ENCODE measurements at regions of chr1 and their contacts with region 1.

Region 1: GRCh38 chr1:63148825-63149645 is 173.3 kb upstream of the FOXD3 start:
- DNase-seq: peak; percentile 20 to 62 (median 40)
- H3K4me3 ChIP-seq: no peak overlapping the region
- H3K27ac ChIP-seq: no peak overlapping the region
- H3K4me1 ChIP-seq: no peaks in the 10 kb centered on the region
- H3K27me3 ChIP-seq: peaks cover 13% of the 10 kb centered on the region
- CTCF ChIP-seq: peak; percentile 30 to 58 (median 52)
- POLR2A ChIP-seq: no peak

Region 2: DNA sequence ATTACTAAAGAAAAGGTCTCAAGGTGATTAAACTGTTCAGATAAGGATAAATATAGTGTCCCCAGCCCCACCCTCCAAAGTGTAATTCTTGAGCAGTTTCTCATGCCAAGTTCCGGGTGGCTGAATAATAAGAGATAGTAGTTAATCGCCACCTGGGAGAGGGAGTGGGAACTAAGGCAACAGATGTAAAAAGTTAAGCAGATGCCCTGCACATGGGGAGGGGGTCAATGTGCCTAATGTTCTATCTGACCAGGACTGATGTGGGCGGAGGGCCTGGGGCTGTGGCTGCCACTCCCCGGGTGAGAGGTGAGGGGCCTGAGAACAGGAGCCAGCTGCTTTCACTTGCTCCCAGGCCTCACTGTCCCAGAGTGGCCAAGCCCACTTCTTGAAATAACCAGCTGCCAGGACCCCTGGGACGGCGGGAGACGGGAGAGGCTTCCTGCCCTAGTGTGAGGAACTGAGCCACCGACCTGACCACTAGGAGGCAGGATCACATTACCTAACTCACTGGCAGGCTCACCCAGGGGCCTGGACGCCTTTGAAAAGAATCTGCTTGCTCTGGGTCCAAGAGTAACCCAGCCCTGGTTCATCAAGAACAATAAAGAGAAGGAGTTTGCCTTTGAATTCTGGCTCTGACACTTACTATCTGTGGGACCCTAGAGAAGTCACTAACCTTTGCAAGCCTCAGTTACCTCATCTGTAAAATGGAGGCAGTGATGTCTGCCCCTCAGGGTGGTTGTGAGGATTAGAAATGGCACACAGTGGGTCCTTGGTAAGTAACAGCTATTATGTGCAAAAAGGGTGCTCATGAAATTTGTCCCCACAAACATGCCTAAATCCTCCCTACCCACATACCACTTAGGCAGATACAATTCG is 185.9 kb before region 1 on chr1:
- intact Hi-C with region 1: loop called in 1 of 2 experiments (anchors 5 kb)
- DNase-seq: peak; percentile 18 to 52 (median 40)
- H3K4me3 ChIP-seq: no peak overlapping the region
- H3K27ac ChIP-seq: no peak overlapping the region
- H3K4me1 ChIP-seq: no peaks in the 10 kb centered on the region
- H3K27me3 ChIP-seq: peaks cover 13% of the 10 kb centered on the region
- CTCF ChIP-seq: peak in 5 of 6 experiments; percentile 18 to 52 (median 42)
- POLR2A ChIP-seq: no peak